PC-9 (cell line): ENCODE measurements at regions of chr3 and their contacts with region 1.

Region 1: GRCh38 chr3:118909763-118910162 is 124.9 kb downstream of the IGSF11 start:
- DNase-seq: no peak
- H3K4me3 ChIP-seq: no peak overlapping the region
- H3K27ac ChIP-seq: no peak overlapping the region
- H3K4me1 ChIP-seq: no peaks in the 10 kb centered on the region
- H3K27me3 ChIP-seq: no peaks in the 10 kb centered on the region
- CTCF ChIP-seq: no peak

Region 2: DNA sequence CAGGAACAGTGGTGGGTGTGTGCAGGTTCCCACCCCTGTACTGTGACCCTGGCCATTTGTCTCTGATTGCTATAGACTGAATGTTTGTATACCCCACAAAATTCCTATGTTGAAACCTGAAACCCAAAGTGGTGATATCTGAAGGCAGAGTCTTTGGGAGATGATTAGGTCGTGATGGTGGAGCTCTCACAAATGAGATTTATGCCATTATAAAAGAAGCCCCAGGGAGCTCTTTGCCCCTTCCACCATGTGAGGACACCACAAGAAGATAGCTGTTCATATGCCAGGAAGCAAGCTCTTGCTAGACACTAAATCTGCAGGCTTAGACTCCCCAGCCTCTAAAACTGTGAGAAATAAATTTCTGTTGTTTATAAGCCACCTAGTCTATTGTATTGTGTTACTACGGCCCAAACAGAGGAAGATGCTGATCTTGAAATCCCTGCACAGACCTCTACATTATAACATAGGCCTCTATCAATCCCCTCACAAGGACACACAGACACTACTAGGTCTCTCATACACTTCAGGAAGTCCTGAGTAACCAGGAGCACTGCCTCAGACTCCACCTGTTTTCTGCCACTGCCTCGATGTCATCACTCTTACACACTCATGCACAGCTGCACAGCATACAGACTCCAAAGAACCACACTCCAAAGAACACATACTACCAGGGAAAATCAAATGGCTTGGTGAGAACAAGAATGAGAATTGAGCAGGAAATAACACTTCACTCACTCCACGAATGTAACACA is 110.2 kb after region 1 on chr3:
- CTCF ChIA-PET with region 1: no interaction called
- POLR2A ChIA-PET with region 1: no interaction called
- intact Hi-C with region 1: loop called (anchors 5 kb)
- DNase-seq: no peak
- H3K4me3 ChIP-seq: no peak overlapping the region
- H3K27ac ChIP-seq: no peak overlapping the region
- H3K4me1 ChIP-seq: no peaks in the 10 kb centered on the region
- H3K27me3 ChIP-seq: no peaks in the 10 kb centered on the region
- CTCF ChIP-seq: no peak